ENCODE measurements at regions of chr5 and their contacts with region 1.

Region 1: GRCh38 chr5:34929150-34929719 is at the start of gene DNAJC21:
- DNase-seq: peak; percentile 97 to 98 (median 97)
- H3K4me3 ChIP-seq: peak within 1 kb of the TSS; percentile 77 to 83
- H3K4me3 Mint-ChIP-seq: peak within 1 kb of the TSS; percentile 96 to 99 (median 98)
- H3K27ac ChIP-seq: peak within 1 kb of the TSS; percentile 84
- H3K27ac Mint-ChIP-seq: peak within 1 kb of the TSS; percentile 89 to 98 (median 96)
- H3K4me1 ChIP-seq: peaks cover 25% of the 10 kb centered on the region
- H3K4me1 Mint-ChIP-seq: peaks cover 24 to 36% (median 31%) of the 10 kb centered on the region in 4 donors
- H3K27me3 ChIP-seq: no peaks in the 10 kb centered on the region
- H3K27me3 Mint-ChIP-seq: no peaks in the 10 kb centered on the region
- total RNA-seq, gene DNAJC21: 63.7 to 67.9 TPM

Region 2: DNA sequence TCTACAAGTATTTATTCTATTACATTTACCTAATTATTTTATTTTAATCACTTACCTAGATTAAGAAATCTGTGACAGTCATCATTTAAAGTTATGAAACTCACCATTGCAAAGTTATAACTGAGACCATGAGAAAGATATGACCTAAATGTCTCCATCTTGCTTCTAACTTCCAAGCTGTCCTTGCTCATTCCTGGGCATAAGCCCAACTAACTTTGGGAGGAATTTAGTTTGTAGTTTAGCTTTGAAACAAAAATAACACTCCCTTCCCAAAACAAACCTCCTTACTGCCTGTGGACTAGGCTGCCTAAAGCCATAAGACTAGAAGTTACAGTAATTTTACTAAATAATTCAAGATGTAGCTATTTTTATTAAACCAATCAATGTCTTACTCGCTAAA is 468.7 kb before region 1 on chr5:
- CTCF ChIA-PET with region 1: no interaction called
- POLR2A ChIA-PET with region 1: no interaction called
- intact Hi-C with region 1: no loop called
- DNase-seq: no peak
- H3K4me3 ChIP-seq: no peak overlapping the region
- H3K4me3 Mint-ChIP-seq: no peak overlapping the region
- H3K27ac ChIP-seq: no peak overlapping the region
- H3K27ac Mint-ChIP-seq: no peak overlapping the region
- H3K4me1 ChIP-seq: no peaks in the 10 kb centered on the region
- H3K4me1 Mint-ChIP-seq: peaks cover 0 to 3% (median 1%) of the 10 kb centered on the region in 4 donors
- H3K27me3 ChIP-seq: no peaks in the 10 kb centered on the region
- H3K27me3 Mint-ChIP-seq: peaks cover 0 to 2% of the 10 kb centered on the region in 2 donors

Region 3: DNA sequence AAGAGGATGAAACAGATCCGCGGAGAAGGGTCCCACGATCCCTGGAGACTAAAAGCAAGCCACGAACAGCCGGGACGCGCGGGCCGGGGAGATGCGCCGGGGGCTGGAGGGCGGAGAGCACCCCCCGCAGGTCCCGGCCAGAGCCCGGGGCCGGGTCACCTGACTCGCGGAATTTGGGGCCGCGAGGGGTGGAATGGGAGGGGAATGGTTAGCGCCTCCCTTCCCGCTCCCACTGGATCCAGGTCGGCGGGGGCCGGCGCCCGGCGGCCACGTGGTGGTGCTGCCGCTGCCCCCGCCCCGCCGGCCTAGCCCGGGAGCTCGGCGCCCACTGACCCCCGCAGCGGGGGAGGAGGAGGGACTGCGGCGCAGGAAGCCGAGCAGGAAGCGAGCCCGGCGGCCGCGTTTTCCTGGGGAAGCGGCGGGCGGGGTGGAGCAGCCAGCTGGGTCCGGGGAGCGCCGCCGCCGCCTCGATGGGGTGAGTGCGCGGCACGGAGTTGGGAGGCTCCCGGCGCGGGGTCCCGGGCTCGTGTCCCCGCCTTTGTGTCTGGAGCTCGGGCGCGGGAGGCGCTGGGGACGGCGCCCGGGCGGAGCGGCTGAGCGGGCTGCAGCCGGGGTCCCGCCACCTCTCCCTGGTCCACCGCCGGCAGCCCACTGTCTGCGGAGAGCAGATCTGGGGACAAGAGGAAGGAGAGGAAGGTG is 273.1 kb before region 1 on chr5 and contains the start of gene RAI14:
- CTCF ChIA-PET with region 1: no interaction called
- POLR2A ChIA-PET with region 1: no interaction called
- intact Hi-C with region 1: loop called (anchors 10 kb)
- DNase-seq: peak in 4 of 5 donors; percentile 7 to 24 (median 12)
- H3K4me3 ChIP-seq: peak within 1 kb of the TSS; percentile 62 to 77
- H3K4me3 Mint-ChIP-seq: peak within 1 kb of the TSS; percentile 85 to 98 (median 95)
- H3K27ac ChIP-seq: peak within 1 kb of the TSS; percentile 11
- H3K27ac Mint-ChIP-seq: peak within 1 kb of the TSS; percentile 72 to 97 (median 87)
- H3K4me1 ChIP-seq: peaks cover 15% of the 10 kb centered on the region
- H3K4me1 Mint-ChIP-seq: peaks cover 12 to 28% (median 22%) of the 10 kb centered on the region in 4 donors
- H3K27me3 ChIP-seq: peaks cover 6% of the 10 kb centered on the region
- H3K27me3 Mint-ChIP-seq: peaks cover 5 to 26% of the 10 kb centered on the region in 2 donors
- total RNA-seq, gene RAI14: 1.9 to 2.6 TPM

Region 4: DNA sequence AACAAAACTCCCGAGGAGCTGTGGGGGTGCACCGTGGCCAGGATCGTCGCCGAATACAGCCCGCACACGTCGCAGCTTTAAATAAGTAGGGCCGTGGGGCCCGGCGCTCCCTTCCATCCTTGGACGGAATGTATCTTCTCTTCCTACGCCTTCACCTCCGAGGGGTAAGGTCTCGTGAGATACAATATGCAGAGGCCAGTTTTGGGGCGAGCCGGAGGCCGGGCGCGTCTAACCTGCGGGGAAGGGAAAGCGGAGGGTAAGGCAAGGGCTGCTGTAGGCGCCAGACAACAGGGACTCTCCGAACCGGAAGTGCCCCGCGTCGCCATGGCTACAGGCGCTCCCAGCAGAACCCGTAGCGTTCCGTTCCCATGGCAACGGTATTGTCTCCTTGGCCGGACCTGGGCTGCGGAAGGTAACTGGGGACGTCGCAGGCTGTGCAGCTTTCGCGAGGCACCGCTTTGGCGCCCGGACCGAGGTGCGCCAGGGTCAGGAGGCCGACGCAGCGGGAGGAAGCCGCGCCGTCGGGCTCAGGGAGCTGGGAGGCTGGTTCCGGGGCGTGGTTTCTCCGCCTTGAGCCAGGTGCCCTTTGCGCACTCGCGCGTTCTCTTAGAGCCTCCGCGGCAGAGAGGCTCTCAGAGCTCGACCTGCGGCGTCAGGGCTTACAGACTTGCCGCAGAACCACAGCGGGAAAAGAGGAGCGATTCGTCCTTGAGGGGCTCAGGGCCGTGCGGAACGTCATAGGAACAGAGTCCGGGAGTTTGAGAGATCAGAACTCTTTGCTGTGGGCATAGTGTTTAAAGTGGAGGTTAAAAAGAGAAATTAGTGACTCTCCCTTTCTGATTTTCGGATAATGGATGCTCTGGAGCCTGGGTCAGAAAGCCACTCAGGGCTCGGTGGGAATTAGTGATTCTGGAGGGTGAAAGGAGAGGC is 90.2 kb before region 1 on chr5 and contains the start of gene TTC23L:
- CTCF ChIA-PET with region 1: interaction called, 4 read pairs
- POLR2A ChIA-PET with region 1: interaction called, 18 read pairs
- intact Hi-C with region 1: loop called (anchors 1 kb)
- DNase-seq: peak; percentile 90 to 97 (median 91)
- H3K4me3 ChIP-seq: peak within 1 kb of the TSS; percentile 88 to 89
- H3K4me3 Mint-ChIP-seq: peak within 1 kb of the TSS; percentile 93 to 98 (median 95)
- H3K27ac ChIP-seq: peak within 1 kb of the TSS; percentile 70
- H3K27ac Mint-ChIP-seq: peak within 1 kb of the TSS; percentile 96 to 99 (median 98)
- H3K4me1 ChIP-seq: peaks cover 13% of the 10 kb centered on the region
- H3K4me1 Mint-ChIP-seq: peaks cover 4 to 16% (median 10%) of the 10 kb centered on the region in 4 donors
- H3K27me3 ChIP-seq: no peaks in the 10 kb centered on the region
- H3K27me3 Mint-ChIP-seq: peaks cover 0 to 2% of the 10 kb centered on the region in 2 donors
- total RNA-seq, gene TTC23L: 0.47 TPM in 1 of 2 experiments, not detected in the other

Region 5: GRCh38 chr5:34915139-34915855 is 13.9 kb before region 1 on chr5 and contains the starts of genes BRIX1 and RAD1:
- CTCF ChIA-PET with region 1: interaction called, 33 read pairs
- POLR2A ChIA-PET with region 1: interaction called, 169 read pairs
- intact Hi-C with region 1: loop called (anchors 1 kb)
- DNase-seq: peak; percentile 92 to 94 (median 94)
- H3K4me3 ChIP-seq: peak within 1 kb of the TSS; percentile 84 to 95
- H3K4me3 Mint-ChIP-seq: peak within 1 kb of the TSS in 4 of 8 donors; percentile 52 to 69 (median 66)
- H3K27ac ChIP-seq: peak within 1 kb of the TSS; percentile 75
- H3K27ac Mint-ChIP-seq: peak within 1 kb of the TSS in 2 of 7 donors; percentile 68 to 81
- H3K4me1 ChIP-seq: peaks cover 40% of the 10 kb centered on the region
- H3K4me1 Mint-ChIP-seq: peaks cover 19 to 37% (median 24%) of the 10 kb centered on the region in 4 donors
- H3K27me3 ChIP-seq: no peaks in the 10 kb centered on the region
- H3K27me3 Mint-ChIP-seq: no peaks in the 10 kb centered on the region
- total RNA-seq, gene BRIX1: 27.1 to 30.9 TPM
- total RNA-seq, gene RAD1: 22.7 to 26.3 TPM

Region 6: GRCh38 chr5:34941936-34942335 is 12.7 kb after region 1 on chr5:
- CTCF ChIA-PET with region 1: interaction called, 3 read pairs
- POLR2A ChIA-PET with region 1: interaction called, 12 read pairs
- intact Hi-C with region 1: no loop called
- DNase-seq: no peak
- H3K4me3 ChIP-seq: no peak overlapping the region
- H3K4me3 Mint-ChIP-seq: no peak overlapping the region
- H3K27ac ChIP-seq: no peak overlapping the region
- H3K27ac Mint-ChIP-seq: peak overlapping the region in 2 of 7 donors; percentile 30 to 73
- H3K4me1 ChIP-seq: no peaks in the 10 kb centered on the region
- H3K4me1 Mint-ChIP-seq: peaks cover 0 to 2% (median under 1%) of the 10 kb centered on the region in 4 donors
- H3K27me3 ChIP-seq: no peaks in the 10 kb centered on the region
- H3K27me3 Mint-ChIP-seq: no peaks in the 10 kb centered on the region

Region 7: DNA sequence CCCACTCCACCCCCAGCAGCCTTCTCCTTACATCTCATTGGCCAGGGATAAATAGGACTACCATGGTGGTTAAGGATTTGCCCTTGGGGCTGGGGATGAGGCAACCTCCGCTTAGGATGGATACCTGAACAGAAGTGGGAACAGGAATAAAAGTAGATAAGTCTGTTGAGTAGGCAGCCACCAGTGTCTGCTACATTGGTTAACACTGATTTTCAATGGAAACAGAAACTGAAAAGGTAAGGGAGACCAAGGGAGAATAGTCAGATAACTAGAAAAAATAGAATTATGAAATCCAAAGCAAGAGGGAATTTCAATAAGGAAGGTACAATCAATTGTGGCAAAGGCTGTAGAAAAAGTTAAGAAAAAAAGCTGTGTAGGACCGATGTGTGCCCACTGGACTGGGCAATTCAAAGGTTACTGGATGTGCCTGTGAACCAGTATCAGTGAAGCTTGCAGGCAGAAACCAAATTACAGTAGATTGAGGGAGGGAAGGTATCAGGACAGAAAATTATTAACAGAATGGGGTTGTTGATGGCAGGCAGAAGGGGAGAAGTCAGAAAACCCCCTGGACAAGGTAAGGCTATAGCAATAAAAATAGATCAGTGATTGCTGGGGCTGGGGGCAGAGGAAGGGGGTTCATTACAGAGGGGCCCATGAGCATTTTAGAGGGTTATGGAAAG is 48.8 kb after region 1 on chr5:
- CTCF ChIA-PET with region 1: no interaction called
- POLR2A ChIA-PET with region 1: no interaction called
- intact Hi-C with region 1: no loop called
- DNase-seq: no peak
- H3K4me3 ChIP-seq: no peak overlapping the region
- H3K4me3 Mint-ChIP-seq: no peak overlapping the region
- H3K27ac ChIP-seq: no peak overlapping the region
- H3K27ac Mint-ChIP-seq: no peak overlapping the region
- H3K4me1 ChIP-seq: no peaks in the 10 kb centered on the region
- H3K4me1 Mint-ChIP-seq: no peaks in the 10 kb centered on the region
- H3K27me3 ChIP-seq: no peaks in the 10 kb centered on the region
- H3K27me3 Mint-ChIP-seq: peaks cover 4 to 6% of the 10 kb centered on the region in 2 donors

Region 8: GRCh38 chr5:36151434-36152323 is 1222.4 kb after region 1 on chr5 and contains the starts of genes LMBRD2 and SKP2:
- CTCF ChIA-PET with region 1: no interaction called
- POLR2A ChIA-PET with region 1: interaction called, 13 read pairs
- intact Hi-C with region 1: no loop called
- DNase-seq: peak; percentile 95 to 99 (median 96)
- H3K4me3 ChIP-seq: peak within 1 kb of the TSS; percentile 77 to 90
- H3K4me3 Mint-ChIP-seq: peak within 1 kb of the TSS; percentile 93 to 98 (median 95)
- H3K27ac ChIP-seq: peak within 1 kb of the TSS; percentile 71
- H3K27ac Mint-ChIP-seq: peak within 1 kb of the TSS; percentile 79 to 98 (median 94)
- H3K4me1 ChIP-seq: peaks cover 58% of the 10 kb centered on the region
- H3K4me1 Mint-ChIP-seq: peaks cover 46 to 75% (median 60%) of the 10 kb centered on the region in 4 donors
- H3K27me3 ChIP-seq: no peaks in the 10 kb centered on the region
- H3K27me3 Mint-ChIP-seq: no peaks in the 10 kb centered on the region
- total RNA-seq, gene LMBRD2: 16.0 to 16.6 TPM
- total RNA-seq, gene SKP2: 21.0 to 23.9 TPM

Region 9: DNA sequence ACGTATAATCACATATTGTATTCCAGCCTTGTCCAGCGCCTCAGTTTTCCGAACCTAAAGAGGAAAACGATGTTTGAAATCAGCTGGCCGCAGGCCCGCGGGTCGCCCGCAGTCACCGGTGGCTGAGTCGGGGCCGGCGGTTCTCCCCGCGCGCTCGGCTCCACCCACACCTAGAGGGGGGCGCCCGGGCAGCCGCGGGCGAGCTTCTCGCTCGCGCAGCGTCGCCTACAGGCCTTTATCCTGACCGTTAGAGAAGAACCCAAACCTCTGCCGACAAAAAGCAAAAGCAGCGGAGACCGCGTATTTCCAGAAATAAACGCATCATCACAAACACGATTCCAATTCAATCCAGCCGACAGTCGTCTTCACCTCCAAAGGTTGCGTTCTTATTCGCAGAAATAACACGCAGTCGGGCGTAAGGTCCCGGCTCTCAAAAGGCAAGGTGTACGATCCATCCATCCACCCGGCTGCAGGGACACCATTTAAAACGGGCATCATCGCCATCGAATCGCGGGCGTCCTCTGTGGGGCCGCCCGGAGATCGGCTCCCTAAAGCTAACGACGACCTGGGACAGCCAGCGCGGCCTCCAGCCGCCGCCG is 1946.7 kb after region 1 on chr5:
- CTCF ChIA-PET with region 1: no interaction called
- POLR2A ChIA-PET with region 1: interaction called, 7 read pairs
- intact Hi-C with region 1: loop called (anchors 2 kb)
- DNase-seq: peak; percentile 74 to 80 (median 76)
- H3K4me3 ChIP-seq: peak overlapping the region; percentile 78 to 86
- H3K4me3 Mint-ChIP-seq: peak overlapping the region; percentile 89 to 99 (median 94)
- H3K27ac ChIP-seq: peak overlapping the region; percentile 93
- H3K27ac Mint-ChIP-seq: peak overlapping the region; percentile 92 to 97 (median 95)
- H3K4me1 ChIP-seq: peaks cover 62% of the 10 kb centered on the region
- H3K4me1 Mint-ChIP-seq: peaks cover 29 to 58% (median 38%) of the 10 kb centered on the region in 4 donors
- H3K27me3 ChIP-seq: no peaks in the 10 kb centered on the region
- H3K27me3 Mint-ChIP-seq: no peaks in the 10 kb centered on the region